Sigmoid colon (tissue), 7 donors: ENCODE measurements at regions of chr1 and their contacts with region 1.

Region 1: DNA sequence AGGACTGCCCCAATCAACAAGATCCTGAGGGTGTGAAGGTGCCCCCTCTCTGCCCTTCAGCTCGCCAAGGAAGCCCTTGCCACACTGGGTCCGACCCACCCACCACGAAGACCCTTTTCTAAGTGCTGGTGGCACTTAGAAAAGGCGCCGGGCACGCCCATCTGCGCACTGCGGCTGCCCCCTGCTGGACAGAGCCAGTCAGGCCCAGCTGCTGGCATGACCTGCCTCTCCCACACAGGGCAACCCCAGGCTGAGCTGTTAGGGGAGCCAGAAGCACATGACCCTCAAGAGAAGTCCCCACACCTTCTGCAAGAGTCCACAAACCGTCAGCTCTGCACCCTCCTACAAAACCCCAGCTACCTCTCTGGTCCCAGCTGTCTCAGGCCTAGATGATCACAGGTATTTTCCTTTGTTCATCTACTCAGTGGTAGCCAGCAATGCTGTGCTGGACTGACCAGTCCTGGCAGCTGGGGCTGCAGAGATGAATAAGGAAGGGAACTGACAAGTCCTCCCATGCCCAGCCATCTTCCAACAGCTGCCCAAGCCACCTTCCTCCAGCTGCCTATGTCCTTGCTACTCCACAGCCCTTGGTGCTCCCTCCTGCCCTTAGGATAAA is 40.0 kb upstream of the ZC3H12A start:
- DNase-seq: peak; percentile 71
- H3K4me3 ChIP-seq: no peak overlapping the region
- H3K27ac ChIP-seq: no peak overlapping the region
- H3K4me1 ChIP-seq: no peaks in the 10 kb centered on the region
- H3K27me3 ChIP-seq: peaks cover 0 to 52% (median 19%) of the 10 kb centered on the region in 3 donors
- CTCF ChIP-seq: peak; percentile 58 to 90 (median 82)
- EP300 ChIP-seq: no peak
- POLR2A ChIP-seq: no peak

Region 2: DNA sequence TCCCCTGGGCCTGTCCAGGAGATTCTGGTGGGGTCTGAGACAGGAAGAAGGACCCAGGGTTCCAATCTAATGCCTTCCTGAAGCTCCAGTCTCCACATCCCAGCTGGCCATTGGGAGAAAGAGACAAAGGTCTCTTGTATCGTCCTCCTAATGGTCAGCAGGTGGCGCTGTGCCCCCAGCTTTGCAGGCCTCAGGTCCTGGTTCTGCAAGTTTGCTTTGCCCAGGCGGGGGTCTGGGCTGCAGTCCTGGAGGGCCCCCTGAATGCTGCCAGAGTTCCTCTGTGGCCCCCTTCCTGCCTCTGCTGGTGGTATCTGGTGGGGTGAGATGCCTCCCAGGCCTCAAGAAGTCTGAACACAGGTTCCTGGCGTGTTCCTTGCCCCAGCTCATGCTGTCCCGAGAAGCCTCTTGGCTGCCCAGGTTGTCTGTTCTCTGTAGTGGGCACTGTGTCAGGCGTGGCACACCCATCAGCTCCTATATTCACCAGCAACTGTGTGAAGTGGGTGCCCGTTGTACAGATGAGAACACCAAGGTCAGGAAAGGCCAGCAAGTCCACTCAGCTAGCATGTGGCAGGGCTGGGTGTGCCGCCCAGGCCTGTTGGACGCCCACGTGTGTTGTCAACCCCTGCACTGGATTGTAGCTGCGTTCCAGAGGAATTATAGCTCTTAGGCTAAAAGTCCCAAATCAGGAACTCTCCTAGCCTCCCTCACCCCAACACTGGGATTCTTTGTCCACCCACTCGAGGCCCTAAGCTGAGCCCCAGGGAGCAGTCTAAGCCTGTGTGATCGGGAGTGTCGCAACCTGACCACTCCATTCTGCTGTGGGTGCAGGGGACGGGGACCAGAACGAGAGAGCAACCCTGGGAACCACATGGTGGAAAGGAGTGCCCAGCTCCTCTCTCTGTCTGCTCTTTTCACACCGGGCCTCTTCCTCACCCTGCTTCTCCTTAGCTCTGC is 917.8 kb before region 1 on chr1:
- intact Hi-C with region 1: loop called (anchors 10 kb)
- DNase-seq: peak; percentile 55
- H3K4me3 ChIP-seq: no peak overlapping the region
- H3K27ac ChIP-seq: no peak overlapping the region
- H3K4me1 ChIP-seq: no peaks in the 10 kb centered on the region
- H3K27me3 ChIP-seq: peaks cover 0 to 5% (median 0%) of the 10 kb centered on the region in 3 donors
- CTCF ChIP-seq: peak in 1 of 4 experiments; percentile 50
- EP300 ChIP-seq: no peak
- POLR2A ChIP-seq: no peak

Region 3: DNA sequence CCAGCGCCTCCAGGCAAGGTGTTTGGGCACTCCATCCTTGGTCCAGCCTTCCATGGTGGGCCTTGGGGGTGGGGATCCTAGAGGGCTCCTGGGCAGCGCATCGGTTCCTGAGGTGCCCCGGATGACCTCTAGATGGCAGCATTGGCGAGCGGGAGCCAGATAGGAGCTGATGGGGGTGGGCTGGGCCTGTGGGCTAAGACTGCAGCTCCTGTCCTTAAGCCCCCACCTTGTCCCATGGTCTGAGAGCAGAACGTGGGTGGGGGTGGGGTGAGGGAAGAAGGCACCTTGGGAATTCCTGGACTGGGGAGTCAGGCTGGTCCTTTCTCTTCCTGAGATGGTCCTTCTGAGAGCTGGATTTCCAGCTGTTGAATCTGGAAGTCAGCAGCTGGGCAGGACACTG is 858.3 kb before region 1 on chr1:
- intact Hi-C with region 1: loop called (anchors 1 kb)
- DNase-seq: no peak
- H3K4me3 ChIP-seq: no peak overlapping the region
- H3K27ac ChIP-seq: no peak overlapping the region
- H3K4me1 ChIP-seq: no peaks in the 10 kb centered on the region
- H3K27me3 ChIP-seq: peaks cover 0 to 65% (median 28%) of the 10 kb centered on the region in 3 donors
- CTCF ChIP-seq: peak; percentile 24 to 82 (median 46)
- EP300 ChIP-seq: no peak
- POLR2A ChIP-seq: no peak